OCI-LY7 (cell line): ENCODE measurements at regions of chr5 and their contacts with region 1.

Region 1: DNA sequence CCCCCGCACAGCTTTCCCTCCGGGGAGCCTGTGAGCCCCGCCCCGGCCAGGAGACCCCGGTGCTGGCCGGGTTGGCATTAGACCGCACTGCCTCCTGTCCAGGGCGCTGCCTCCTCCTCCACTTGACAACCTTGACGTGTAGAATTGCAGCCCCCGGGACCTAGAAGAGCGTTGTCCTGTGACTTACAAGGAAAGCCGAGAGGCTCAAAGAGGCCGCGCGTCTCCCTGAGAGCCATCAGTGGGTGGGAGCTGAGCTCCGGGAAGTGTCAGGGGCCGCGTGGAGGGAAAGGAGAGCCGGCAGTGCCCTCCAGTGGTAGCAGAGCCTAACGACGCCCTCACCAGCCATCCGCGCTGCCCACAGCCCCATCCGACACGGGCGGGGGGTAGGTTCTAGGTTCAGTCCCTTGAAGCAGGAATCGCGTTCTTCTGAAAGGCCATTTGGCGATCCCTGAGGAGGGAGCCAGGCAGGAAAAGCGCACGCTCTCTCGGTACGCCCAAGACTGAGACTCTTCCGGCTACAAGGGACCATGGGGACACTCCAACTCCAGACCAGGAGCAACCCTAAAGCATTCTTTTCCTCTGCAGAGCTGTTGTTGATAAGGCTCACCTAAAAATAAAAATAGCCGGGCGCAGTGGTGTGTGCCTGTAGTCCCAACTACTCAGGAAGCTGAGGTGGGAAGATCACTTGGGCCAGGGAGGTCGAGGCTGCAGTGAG is 40.6 kb upstream of the SAP30L start:
- DNase-seq: peak; percentile 55
- H3K4me3 ChIP-seq: no peak overlapping the region
- H3K27ac ChIP-seq: no peak overlapping the region
- H3K4me1 ChIP-seq: no peaks in the 10 kb centered on the region
- CTCF ChIP-seq: peak; percentile 74

Region 2: DNA sequence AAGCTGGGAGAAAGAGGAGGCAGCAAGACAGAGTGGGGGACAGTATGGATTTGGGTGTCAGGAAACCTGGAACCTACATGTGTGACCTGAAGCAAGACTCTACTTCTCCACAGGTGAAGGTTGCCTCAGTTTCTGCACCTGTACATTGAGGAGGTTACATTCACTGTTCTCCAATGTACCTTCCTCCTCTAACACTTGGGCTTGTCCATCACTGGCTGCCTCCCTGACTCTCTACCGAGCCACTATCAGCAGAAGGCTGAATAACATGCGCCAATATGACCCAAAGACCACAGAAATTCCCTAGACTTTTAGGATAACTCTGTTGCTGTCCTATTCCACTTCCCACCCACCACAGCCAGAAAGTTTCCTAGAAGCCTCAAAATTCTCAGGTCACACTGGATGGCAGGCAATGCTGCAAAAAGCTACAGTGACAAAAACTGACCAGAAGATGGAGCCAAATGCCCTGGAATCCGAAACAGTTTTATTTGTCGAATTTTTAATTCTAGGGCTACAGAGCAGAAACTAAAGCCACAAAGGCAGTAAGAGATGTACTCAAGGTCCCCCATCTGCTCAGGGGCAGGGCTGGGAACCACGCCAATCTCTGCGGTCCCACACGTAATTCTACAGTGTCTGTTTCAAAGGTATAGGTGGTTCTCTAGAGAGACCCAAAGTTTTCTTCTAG is 431.0 kb before region 1 on chr5:
- CTCF ChIA-PET with region 1: no interaction called
- POLR2A ChIA-PET with region 1: no interaction called
- intact Hi-C with region 1: loop called (anchors 1 kb)
- DNase-seq: peak; percentile 51
- H3K4me3 ChIP-seq: no peak overlapping the region
- H3K27ac ChIP-seq: no peak overlapping the region
- H3K4me1 ChIP-seq: no peaks in the 10 kb centered on the region
- CTCF ChIP-seq: peak; percentile 93

Region 3: GRCh38 chr5:154072414-154073171 is 332.6 kb before region 1 on chr5:
- CTCF ChIA-PET with region 1: no interaction called
- POLR2A ChIA-PET with region 1: interaction called, 3 read pairs
- intact Hi-C with region 1: loop called (anchors 1 kb)
- DNase-seq: peak; percentile 76
- H3K4me3 ChIP-seq: peak overlapping the region; percentile 10
- H3K27ac ChIP-seq: no peak overlapping the region
- H3K4me1 ChIP-seq: no peaks in the 10 kb centered on the region
- CTCF ChIP-seq: peak; percentile 98

Region 4: GRCh38 chr5:154179846-154180710 is 225.2 kb before region 1 on chr5:
- CTCF ChIA-PET with region 1: no interaction called
- POLR2A ChIA-PET with region 1: interaction called, 3 read pairs
- intact Hi-C with region 1: loop called (anchors 5 kb)
- DNase-seq: peak; percentile 71
- H3K4me3 ChIP-seq: no peak overlapping the region
- H3K27ac ChIP-seq: no peak overlapping the region
- H3K4me1 ChIP-seq: no peaks in the 10 kb centered on the region
- CTCF ChIP-seq: peak; percentile 84

Region 5: DNA sequence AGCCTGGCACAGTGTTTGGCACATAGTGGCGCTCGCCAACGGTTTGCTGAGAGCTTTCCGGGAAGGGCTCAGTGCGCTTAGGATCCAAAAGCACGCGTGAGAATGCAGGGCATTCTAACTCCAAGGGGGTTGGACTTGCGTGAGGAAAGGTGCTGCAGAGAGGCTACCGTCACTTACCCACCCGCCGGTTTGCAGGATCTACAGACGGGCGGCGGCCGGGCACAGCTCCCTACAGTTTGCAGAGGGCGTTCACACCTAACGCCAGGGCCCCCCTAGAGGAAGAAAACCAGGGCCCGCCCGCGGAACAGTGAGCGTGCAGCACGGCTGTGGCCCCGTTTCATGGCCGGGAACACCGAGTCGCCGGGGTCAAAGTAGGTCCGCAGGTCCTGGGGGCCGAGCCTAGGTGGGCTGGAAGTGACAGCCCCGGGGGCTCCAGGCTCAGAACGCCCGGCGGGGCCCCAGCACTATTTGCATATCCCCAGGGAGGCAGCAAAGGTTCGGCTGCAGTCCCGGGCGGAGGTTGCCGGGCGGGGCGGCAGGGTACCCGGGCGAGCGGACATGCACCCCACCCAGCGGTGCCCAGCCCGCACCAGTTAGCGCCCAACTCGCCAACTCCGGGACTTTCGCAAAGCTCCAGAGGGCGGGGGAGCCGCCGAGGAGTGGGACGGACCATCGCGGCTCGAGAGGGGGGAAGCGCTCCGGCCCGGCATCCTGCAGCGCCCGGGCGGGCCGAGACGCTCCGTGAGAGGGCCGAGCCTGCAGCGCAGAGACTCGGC is 215.2 kb before region 1 on chr5:
- CTCF ChIA-PET with region 1: no interaction called
- POLR2A ChIA-PET with region 1: no interaction called
- intact Hi-C with region 1: loop called (anchors 5 kb)
- DNase-seq: peak; percentile 90
- H3K4me3 ChIP-seq: peak overlapping the region; percentile 83
- H3K27ac ChIP-seq: peak overlapping the region; percentile 75
- H3K4me1 ChIP-seq: peaks cover 25% of the 10 kb centered on the region
- CTCF ChIP-seq: peak; percentile 73